GM10248 (cell line): ENCODE measurements at regions of chr20 and their contacts with region 1.

Region 1: GRCh38 chr20:59087829-59088433 is 45.3 kb upstream of the PRELID3B start:
- DNase-seq: peak; percentile 67
- CTCF ChIP-seq: peak; percentile 81

Region 2: GRCh38 chr20:58864350-58864749 is 223.6 kb before region 1 on chr20:
- CTCF ChIA-PET with region 1: interaction called, 15 read pairs
- POLR2A ChIA-PET with region 1: no interaction called
- DNase-seq: no peak
- CTCF ChIP-seq: peak; percentile 57

Region 3: DNA sequence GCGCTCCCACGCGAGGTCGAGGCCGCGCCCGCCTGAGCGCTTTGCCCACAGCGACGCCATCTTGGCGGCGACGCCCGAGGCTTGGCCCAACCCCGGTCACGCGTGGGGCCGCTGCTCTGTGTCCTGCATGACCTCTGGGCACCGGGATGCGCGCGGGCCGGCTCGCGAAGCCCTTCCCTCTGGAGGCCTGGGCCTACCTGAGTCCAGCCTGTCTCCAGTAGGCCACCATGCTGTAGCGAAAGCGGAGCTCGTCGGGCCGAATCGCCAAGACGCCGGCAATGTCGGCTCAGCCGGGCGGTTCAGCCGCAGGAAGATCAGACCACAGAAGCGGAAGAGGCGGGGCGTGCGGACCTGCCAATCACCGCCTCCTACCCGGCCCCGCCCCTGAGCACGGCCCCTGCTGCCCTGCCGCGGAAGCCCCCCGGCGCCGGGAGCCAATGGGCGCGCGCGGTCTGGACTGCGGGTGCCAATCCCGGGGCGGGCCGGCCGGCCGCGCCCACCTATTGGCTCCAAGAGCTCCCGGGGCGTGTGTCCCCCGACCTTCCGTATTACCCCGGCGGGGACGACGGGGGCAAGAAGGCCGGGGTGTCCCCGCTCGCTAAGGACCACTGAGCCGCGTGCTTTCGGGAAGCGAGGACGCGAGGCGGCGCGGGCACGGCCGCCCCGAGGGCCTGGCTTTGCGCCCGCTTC is 55.8 kb before region 1 on chr20 and contains the start of gene ATP5F1E:
- CTCF ChIA-PET with region 1: no interaction called
- POLR2A ChIA-PET with region 1: no interaction called
- DNase-seq: peak; percentile 98
- CTCF ChIP-seq: no peak

Region 4: DNA sequence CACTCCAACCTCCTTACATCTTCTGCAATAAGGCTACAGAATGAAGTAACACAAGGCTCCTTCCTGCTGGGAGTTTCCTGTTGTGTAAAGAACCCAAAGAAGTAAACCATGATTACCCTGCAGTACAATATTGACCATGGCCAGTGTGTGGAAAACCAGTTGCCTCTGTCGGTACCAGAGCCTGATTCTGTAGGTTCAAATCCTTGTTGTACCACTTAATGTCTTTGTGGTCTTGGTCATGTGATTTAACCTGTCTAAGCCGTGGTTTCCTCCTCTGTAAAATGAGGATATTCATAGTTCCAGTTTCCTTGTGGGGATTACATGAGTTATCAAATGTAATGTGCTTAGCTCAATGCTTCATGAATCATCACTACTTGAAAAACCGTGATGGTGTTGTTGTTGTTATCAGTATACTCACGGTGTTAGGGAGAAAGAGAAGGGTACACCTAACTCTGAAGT is 14.9 kb after region 1 on chr20:
- CTCF ChIA-PET with region 1: interaction called, 30 read pairs
- POLR2A ChIA-PET with region 1: no interaction called
- DNase-seq: no peak
- CTCF ChIP-seq: no peak

Region 5: GRCh38 chr20:59191756-59192532 is 104.0 kb after region 1 on chr20:
- CTCF ChIA-PET with region 1: interaction called, 10 read pairs
- POLR2A ChIA-PET with region 1: no interaction called
- DNase-seq: no peak
- CTCF ChIP-seq: no peak

Region 6: GRCh38 chr20:59214606-59215547 is 126.9 kb after region 1 on chr20:
- CTCF ChIA-PET with region 1: interaction called, 115 read pairs
- POLR2A ChIA-PET with region 1: no interaction called
- DNase-seq: no peak
- CTCF ChIP-seq: no peak

Region 7: DNA sequence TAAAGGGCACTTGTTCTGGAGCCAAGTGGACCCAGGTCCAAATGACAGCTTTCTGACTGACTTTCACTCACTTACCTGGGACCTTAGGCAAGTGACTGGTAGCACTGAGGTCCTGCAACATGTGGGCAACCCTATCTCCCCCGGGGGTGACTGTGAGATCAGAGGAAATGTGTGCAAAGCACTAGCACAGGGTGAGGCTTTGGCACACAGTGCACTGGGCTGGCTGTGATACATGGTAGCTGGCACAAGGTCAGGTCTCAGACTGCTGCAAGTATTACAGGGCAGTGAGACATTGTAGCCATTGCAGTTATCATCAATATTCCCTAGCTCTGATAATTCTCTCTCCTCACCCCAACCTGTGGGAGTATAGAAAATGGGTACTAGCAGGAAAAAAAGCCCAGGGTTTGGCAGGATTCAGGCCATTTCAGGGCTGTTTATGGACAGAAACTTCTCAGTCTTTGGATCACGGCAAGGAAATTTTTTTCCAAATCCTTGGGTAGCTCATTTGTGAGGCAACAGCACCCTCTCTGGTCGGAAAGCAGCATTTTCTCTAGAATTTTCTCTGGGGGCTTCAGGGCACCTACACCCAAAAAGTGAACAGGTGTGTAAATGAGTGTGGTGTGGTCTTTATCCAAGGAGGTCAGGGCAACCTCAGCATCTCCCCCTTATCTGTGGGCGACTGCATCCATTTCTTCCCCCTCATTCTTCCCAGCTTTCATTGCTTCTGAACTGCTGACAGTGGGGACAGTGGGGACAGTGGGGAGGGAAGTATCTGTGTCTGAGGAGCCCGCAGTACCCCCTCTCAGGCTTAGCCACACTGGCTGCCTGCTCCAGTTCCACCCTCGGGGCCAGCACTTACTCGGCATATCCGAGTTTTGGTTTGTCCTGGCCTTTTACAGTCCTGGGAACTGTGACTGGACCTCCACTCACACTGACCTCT is 367.7 kb after region 1 on chr20:
- CTCF ChIA-PET with region 1: interaction called, 14 read pairs
- POLR2A ChIA-PET with region 1: no interaction called
- DNase-seq: no peak
- CTCF ChIP-seq: peak; percentile 45